ENCODE measurements at regions of chr13 and their contacts with region 1.

Region 1: GRCh38 chr13:94601446-94602431 is at the start of gene GPR180:
- DNase-seq: peak; percentile 95
- ATAC-seq: peak; percentile 100
- H3K4me3 Mint-ChIP-seq: peak within 1 kb of the TSS; percentile 89
- H3K27ac Mint-ChIP-seq: peak within 1 kb of the TSS; percentile 77
- H3K4me1 Mint-ChIP-seq: peaks cover 31% of the 10 kb centered on the region
- H3K27me3 Mint-ChIP-seq: no peaks in the 10 kb centered on the region
- total RNA-seq, gene GPR180: 8.0 to 8.6 TPM

Region 2: DNA sequence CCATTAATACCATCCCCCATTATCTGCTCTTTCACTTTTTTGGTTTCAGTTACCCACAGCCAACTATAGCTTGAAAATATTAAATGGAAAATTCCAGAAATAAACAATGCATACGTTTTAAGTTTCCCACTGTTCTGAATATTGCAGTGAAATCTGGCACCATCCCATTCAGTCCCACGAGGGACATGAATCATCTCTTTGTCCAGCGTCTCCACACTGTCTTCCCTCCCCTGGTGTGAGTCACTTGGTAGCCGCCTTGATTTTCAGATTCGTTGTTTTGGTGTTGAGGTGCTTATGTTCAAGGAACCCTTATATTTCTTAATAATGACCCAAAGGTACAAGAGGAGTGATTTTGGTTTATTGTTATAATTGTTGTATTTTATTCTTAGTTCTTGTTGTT is 368.3 kb before region 1 on chr13:
- CTCF ChIA-PET with region 1: no interaction called
- POLR2A ChIA-PET with region 1: no interaction called
- intact Hi-C with region 1: loop called in 1 of 2 experiments (anchors 10 kb)
- DNase-seq: no peak
- ATAC-seq: no peak
- H3K4me3 Mint-ChIP-seq: no peak overlapping the region
- H3K27ac Mint-ChIP-seq: no peak overlapping the region
- H3K4me1 Mint-ChIP-seq: peaks cover 23% of the 10 kb centered on the region
- H3K27me3 Mint-ChIP-seq: no peaks in the 10 kb centered on the region

Region 3: GRCh38 chr13:94327318-94327717 is 274.4 kb before region 1 on chr13:
- CTCF ChIA-PET with region 1: no interaction called
- POLR2A ChIA-PET with region 1: no interaction called
- intact Hi-C with region 1: loop called in 1 of 2 experiments (anchors 5 kb)
- DNase-seq: no peak
- ATAC-seq: peak; percentile 53
- H3K4me3 Mint-ChIP-seq: no peak overlapping the region
- H3K27ac Mint-ChIP-seq: peak overlapping the region; percentile 37
- H3K4me1 Mint-ChIP-seq: peaks cover 64% of the 10 kb centered on the region
- H3K27me3 Mint-ChIP-seq: peaks cover 10% of the 10 kb centered on the region

Region 4: GRCh38 chr13:94620286-94620896 is 18.7 kb after region 1 on chr13:
- CTCF ChIA-PET with region 1: interaction called, 48 read pairs
- POLR2A ChIA-PET with region 1: interaction called, 3 read pairs
- intact Hi-C with region 1: no loop called
- DNase-seq: peak; percentile 51
- ATAC-seq: peak; percentile 63
- H3K4me3 Mint-ChIP-seq: no peak overlapping the region
- H3K27ac Mint-ChIP-seq: no peak overlapping the region
- H3K4me1 Mint-ChIP-seq: peaks cover 10% of the 10 kb centered on the region
- H3K27me3 Mint-ChIP-seq: no peaks in the 10 kb centered on the region

Region 5: GRCh38 chr13:95301183-95301967 is 699.6 kb after region 1 on chr13 and contains the start of gene ABCC4:
- CTCF ChIA-PET with region 1: no interaction called
- POLR2A ChIA-PET with region 1: no interaction called
- intact Hi-C with region 1: loop called in 1 of 2 experiments (anchors 2 kb)
- DNase-seq: peak; percentile 76
- ATAC-seq: peak; percentile 81
- H3K4me3 Mint-ChIP-seq: peak within 1 kb of the TSS; percentile 78
- H3K27ac Mint-ChIP-seq: peak within 1 kb of the TSS; percentile 66
- H3K4me1 Mint-ChIP-seq: peaks cover 43% of the 10 kb centered on the region
- H3K27me3 Mint-ChIP-seq: peaks cover 8% of the 10 kb centered on the region
- total RNA-seq, gene ABCC4: 9.0 to 9.5 TPM

Region 6: DNA sequence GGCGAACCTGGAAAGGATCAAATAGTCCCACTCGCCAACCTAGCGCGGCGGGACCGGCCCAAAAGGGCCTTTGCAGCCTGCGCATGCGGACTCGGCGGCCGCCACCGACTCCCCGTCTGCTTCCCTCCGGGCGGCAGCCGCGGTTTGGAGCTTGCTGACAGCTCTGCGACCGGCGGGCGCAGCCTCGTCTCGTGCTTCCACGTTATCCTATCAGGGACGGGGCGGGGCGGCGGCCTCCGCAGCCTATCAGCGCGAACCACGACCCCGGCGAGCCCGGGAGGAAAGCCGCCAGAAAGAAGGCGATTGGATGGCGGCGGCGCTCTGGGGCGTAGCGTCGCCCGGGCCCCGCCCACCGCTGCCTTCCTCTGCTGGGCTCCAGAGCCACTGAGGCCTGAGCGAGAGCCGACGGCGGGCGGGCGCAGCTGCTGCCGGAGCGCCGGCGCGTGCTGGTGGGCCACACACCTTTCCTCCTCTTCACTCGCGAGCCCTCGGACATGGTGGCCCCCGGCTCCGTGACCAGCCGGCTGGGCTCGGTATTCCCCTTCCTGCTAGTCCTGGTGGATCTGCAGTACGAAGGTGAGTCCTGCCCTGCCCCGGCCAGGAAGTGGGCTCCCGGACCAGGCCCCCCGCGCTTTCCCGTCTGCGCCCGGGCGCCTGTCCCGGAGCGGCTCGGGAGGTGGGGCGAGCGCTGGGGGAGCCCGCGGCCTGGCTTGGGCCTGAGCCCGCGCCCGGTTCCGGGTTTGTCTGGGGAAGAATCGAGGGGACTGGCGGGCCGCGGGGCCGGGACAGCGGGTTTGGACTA is 1075.2 kb after region 1 on chr13 and contains the start of gene DNAJC3:
- CTCF ChIA-PET with region 1: no interaction called
- POLR2A ChIA-PET with region 1: no interaction called
- intact Hi-C with region 1: loop called (anchors 5 kb)
- DNase-seq: peak; percentile 99
- ATAC-seq: peak; percentile 96
- H3K4me3 Mint-ChIP-seq: peak within 1 kb of the TSS; percentile 96
- H3K27ac Mint-ChIP-seq: peak within 1 kb of the TSS; percentile 92
- H3K4me1 Mint-ChIP-seq: peaks cover 52% of the 10 kb centered on the region
- H3K27me3 Mint-ChIP-seq: no peaks in the 10 kb centered on the region
- total RNA-seq, gene DNAJC3: 13.4 to 16.3 TPM

Measured in activated CD4-positive, alpha-beta T cell treated with anti-CD3 and anti-CD28 coated beads for 36 hours (primary cell).